ENCODE measurements at regions of chr4 and their contacts with region 1.

Region 1: DNA sequence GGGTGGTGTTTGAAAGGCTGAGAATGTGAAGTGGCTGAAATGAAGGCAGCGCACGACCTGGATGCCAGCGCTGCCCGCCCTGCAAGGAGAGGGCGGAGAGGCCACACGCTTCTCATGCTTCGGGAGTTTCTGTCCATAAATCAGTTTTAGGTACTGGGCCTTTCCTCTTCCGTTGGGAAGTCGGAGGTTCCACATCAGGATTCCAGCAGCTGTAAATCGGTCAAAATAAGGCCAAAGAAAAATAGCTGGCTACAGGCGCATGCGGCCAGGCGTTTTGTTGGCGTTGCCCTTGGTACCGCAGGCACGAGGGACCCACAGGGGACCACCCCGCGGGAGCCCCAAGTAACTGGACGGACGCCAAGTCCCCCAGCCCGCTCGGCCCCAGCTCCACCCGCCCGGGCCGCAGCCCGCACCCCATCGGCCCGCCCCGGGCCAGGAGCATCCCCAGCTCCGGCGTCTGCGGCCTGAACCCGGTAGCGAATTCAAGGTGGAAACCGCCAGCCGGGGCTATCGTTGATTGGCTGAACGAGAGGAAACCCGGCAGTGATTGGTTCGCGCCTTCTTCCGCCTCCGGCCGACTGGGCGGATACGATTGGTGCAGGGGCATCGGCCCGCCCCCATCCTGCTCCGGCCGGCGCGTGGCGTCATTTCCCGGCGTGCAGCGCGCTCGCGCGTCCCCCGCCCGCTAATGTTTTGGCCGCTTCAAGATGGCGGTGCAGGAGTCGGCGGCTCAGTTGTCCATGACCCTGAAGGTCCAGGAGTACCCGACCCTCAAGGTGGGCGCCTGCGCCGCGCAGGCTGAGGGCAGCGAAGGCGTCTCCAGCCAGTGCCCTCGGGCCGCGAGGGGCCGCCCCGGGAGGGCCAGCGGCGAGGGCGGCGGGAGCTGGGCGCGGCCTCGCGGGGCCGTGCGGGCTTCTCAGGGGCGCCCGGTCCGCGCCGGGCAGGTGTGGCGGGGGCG is at the start of gene MAEA:
- DNase-seq: peak; percentile 98
- ATAC-seq: peak; percentile 98
- H3K4me3 Mint-ChIP-seq: peak within 1 kb of the TSS; percentile 91
- H3K27ac Mint-ChIP-seq: peak within 1 kb of the TSS; percentile 89
- H3K4me1 Mint-ChIP-seq: peaks cover 29% of the 10 kb centered on the region
- H3K27me3 Mint-ChIP-seq: no peaks in the 10 kb centered on the region
- CTCF ChIP-seq: no peak
- total RNA-seq, gene MAEA: 32.3 to 37.0 TPM

Region 2: GRCh38 chr4:1137063-1137776 is 152.3 kb before region 1 on chr4:
- CTCF ChIA-PET with region 1: interaction called, 39 read pairs
- POLR2A ChIA-PET with region 1: no interaction called
- intact Hi-C with region 1: no loop called
- DNase-seq: no peak
- ATAC-seq: peak; percentile 53
- H3K4me3 Mint-ChIP-seq: peak overlapping the region; percentile 62
- H3K27ac Mint-ChIP-seq: peak overlapping the region; percentile 65
- H3K4me1 Mint-ChIP-seq: peaks cover 9% of the 10 kb centered on the region
- H3K27me3 Mint-ChIP-seq: peaks cover 2% of the 10 kb centered on the region
- CTCF ChIP-seq: no peak

Region 3: DNA sequence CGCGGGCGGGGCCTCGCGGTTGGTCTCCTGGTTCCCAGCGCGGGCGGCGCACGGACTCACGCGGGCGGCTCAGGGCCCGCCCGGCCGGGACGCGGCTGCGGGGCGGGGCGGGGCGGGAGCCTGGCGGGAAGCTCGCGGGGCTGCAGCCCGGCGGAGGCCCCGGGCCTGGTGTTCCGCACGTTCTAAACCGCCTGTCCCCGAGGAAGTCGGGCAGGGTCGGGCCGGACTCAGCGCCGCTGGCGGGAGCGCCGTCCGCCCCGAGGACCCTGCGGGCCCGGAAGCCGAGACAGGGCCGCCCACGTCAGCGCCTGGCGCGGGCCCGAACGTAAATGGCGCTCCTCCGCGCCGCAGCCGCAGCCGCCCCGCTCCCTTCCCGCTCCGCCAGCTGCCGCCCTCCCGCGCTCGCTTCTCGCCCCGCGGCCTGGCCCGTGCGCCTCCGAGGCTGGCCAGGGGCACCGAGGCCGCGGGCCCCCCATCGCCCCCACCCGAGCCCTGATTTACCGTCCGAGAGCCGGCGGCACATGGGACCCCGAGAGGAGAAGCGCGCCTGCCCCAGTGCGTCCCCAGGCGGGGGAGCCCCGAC is 40.2 kb before region 1 on chr4:
- CTCF ChIA-PET with region 1: no interaction called
- POLR2A ChIA-PET with region 1: interaction called, 21 read pairs
- intact Hi-C with region 1: no loop called
- DNase-seq: peak; percentile 79
- ATAC-seq: peak; percentile 51
- H3K4me3 Mint-ChIP-seq: peak overlapping the region; percentile 86
- H3K27ac Mint-ChIP-seq: peak overlapping the region; percentile 91
- H3K4me1 Mint-ChIP-seq: peaks cover 69% of the 10 kb centered on the region
- H3K27me3 Mint-ChIP-seq: no peaks in the 10 kb centered on the region
- CTCF ChIP-seq: no peak

Region 4: GRCh38 chr4:1300466-1301455 is 11.3 kb after region 1 on chr4:
- CTCF ChIA-PET with region 1: interaction called, 8 read pairs
- POLR2A ChIA-PET with region 1: interaction called, 14 read pairs
- intact Hi-C with region 1: no loop called
- DNase-seq: peak; percentile 26
- ATAC-seq: peak; percentile 45
- H3K4me3 Mint-ChIP-seq: no peak overlapping the region
- H3K27ac Mint-ChIP-seq: peak overlapping the region; percentile 71
- H3K4me1 Mint-ChIP-seq: peaks cover 48% of the 10 kb centered on the region
- H3K27me3 Mint-ChIP-seq: no peaks in the 10 kb centered on the region
- CTCF ChIP-seq: no peak

Region 5: GRCh38 chr4:1346781-1347409 is 57.4 kb after region 1 on chr4 and contains the start of gene UVSSA:
- CTCF ChIA-PET with region 1: interaction called, 8 read pairs
- POLR2A ChIA-PET with region 1: interaction called, 23 read pairs
- intact Hi-C with region 1: no loop called
- DNase-seq: peak; percentile 100
- ATAC-seq: peak; percentile 96
- H3K4me3 Mint-ChIP-seq: peak within 1 kb of the TSS; percentile 84
- H3K27ac Mint-ChIP-seq: peak within 1 kb of the TSS; percentile 90
- H3K4me1 Mint-ChIP-seq: peaks cover 43% of the 10 kb centered on the region
- H3K27me3 Mint-ChIP-seq: no peaks in the 10 kb centered on the region
- CTCF ChIP-seq: no peak
- total RNA-seq, gene UVSSA: 18.6 to 20.2 TPM

Measured in activated CD8-positive, alpha-beta T cell treated with anti-CD3 and anti-CD28 coated beads for 36 hours (primary cell).